ENCODE measurements at regions of chr19 and their contacts with region 1.

Region 1: GRCh38 chr19:39445265-39446111 is at the start of gene SUPT5H:
- H3K4me3 Mint-ChIP-seq: peak within 1 kb of the TSS; percentile 98
- H3K27ac Mint-ChIP-seq: peak within 1 kb of the TSS; percentile 98
- H3K4me1 Mint-ChIP-seq: peaks cover 46% of the 10 kb centered on the region
- H3K27me3 Mint-ChIP-seq: no peaks in the 10 kb centered on the region

Region 2: GRCh38 chr19:39480337-39481228 is 35.1 kb after region 1 on chr19 and contains the start of gene TIMM50:
- intact Hi-C with region 1: loop called (anchors 1 kb)
- H3K4me3 Mint-ChIP-seq: peak within 1 kb of the TSS; percentile 87
- H3K27ac Mint-ChIP-seq: peak within 1 kb of the TSS; percentile 92
- H3K4me1 Mint-ChIP-seq: peaks cover 25% of the 10 kb centered on the region
- H3K27me3 Mint-ChIP-seq: no peaks in the 10 kb centered on the region

Region 3: GRCh38 chr19:39631178-39631577 is 185.7 kb after region 1 on chr19:
- intact Hi-C with region 1: no loop called
- H3K4me3 Mint-ChIP-seq: no peak overlapping the region
- H3K27ac Mint-ChIP-seq: no peak overlapping the region
- H3K4me1 Mint-ChIP-seq: no peaks in the 10 kb centered on the region
- H3K27me3 Mint-ChIP-seq: peaks cover 16% of the 10 kb centered on the region